AG04449 (cell line): ENCODE measurements at regions of chr7 and their contacts with region 1.

Region 1: GRCh38 chr7:27160546-27161213 is 4.2 kb upstream of the HOXA7 start:
- DNase-seq: no peak
- H3K4me3 ChIP-seq: peak overlapping the region; percentile 75
- CTCF ChIP-seq: peak; percentile 100

Region 2: GRCh38 chr7:26376175-26376917 is 784.3 kb before region 1 on chr7:
- CTCF ChIA-PET with region 1: interaction called, 37 read pairs
- POLR2A ChIA-PET with region 1: no interaction called
- DNase-seq: no peak
- H3K4me3 ChIP-seq: no peak overlapping the region
- CTCF ChIP-seq: no peak

Region 3: GRCh38 chr7:26686448-26686981 is 474.2 kb before region 1 on chr7:
- CTCF ChIA-PET with region 1: interaction called, 23 read pairs
- POLR2A ChIA-PET with region 1: interaction called, 3 read pairs
- DNase-seq: no peak
- H3K4me3 ChIP-seq: no peak overlapping the region
- CTCF ChIP-seq: peak; percentile 12

Region 4: DNA sequence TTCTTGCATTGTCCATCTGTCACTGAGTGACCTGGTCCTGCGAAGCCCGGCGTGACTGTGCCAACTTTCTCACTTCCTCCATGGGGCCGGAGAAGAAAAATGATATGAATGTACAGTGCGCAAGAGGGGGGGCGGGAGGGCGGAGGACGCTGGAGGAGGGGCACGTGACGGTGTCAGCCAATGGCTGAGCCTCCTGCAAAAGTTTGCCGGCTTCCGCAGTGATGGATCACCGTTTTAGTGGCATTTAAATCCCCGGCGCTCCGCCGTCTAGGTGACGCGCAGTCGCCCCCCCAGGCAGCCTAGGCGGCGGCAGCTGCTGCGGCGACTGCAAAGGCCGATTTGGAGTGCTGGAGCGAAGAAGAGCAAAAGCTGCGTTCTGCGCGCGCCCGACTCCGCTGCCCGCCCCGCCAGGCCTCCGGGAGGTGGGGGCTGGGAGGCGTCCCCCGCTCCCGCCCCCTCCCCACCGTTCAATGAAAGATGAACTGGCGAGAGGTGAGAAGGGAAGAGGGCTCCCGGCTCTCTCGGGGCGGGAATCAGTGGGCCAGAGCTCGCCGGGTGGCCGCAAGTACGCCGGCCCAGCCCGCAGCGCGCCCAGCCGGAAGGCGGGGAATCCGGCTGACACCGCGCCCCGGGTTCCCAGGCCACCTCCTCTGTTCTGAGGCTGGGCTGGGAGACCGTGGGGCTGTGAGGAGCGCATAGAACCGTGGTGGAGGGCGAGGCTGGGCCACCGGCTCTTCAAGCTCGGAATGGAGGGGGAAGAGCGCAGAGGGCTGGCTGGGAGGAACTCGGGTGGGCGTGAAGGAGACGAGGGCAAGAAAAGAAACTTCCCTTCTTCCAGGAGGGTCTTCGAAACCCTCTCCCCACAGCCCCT is 64.5 kb before region 1 on chr7 and contains the start of gene HOXA1:
- CTCF ChIA-PET with region 1: interaction called, 10 read pairs
- POLR2A ChIA-PET with region 1: no interaction called
- DNase-seq: peak; percentile 58
- H3K4me3 ChIP-seq: peak within 1 kb of the TSS; percentile 77
- CTCF ChIP-seq: no peak

Region 5: DNA sequence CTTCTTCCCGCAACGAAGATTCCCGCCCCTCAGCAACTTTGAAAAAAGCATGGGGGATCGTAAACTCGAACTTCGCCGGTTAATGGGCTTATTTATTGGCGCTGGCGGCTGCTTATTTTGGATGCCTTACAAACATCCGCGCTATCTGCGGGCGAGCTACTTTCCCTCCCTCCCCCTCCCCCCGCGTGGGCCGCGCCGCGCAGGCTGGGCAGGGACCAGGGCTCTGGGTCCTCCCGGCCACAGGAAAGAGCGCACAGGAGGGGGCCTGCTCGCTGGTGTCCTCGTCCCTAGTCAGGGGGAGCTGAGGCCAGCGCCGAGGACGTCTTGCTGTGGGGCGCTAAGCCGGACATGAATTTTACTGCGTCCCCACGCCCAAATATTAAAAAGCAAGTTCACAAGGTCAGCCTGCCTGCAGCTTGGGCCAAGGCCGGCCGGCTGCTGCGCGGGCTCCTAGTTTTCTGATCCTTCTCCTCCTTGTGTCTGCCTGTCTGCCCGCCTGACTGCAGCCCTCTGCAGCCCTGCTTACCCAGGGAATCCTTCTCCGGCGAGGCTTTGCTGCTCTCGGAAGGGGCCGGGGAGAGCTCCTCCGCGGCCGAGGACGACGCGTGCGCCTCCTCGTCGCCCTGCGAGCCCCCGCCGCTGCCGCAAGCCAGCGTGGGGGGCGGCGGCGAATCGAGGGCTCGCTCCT is 12.3 kb after region 1 on chr7:
- CTCF ChIA-PET with region 1: interaction called, 117 read pairs
- POLR2A ChIA-PET with region 1: interaction called, 33 read pairs
- DNase-seq: no peak
- H3K4me3 ChIP-seq: peak overlapping the region; percentile 75
- CTCF ChIP-seq: no peak

Region 6: GRCh38 chr7:27210441-27211083 is 49.9 kb after region 1 on chr7:
- CTCF ChIA-PET with region 1: no interaction called
- POLR2A ChIA-PET with region 1: no interaction called
- DNase-seq: no peak
- H3K4me3 ChIP-seq: peak overlapping the region; percentile 23; the same call in 1 of the 2 replicates
- CTCF ChIP-seq: peak; percentile 77